PC-3 (cell line): ENCODE measurements at regions of chr17 and their contacts with region 1.

Region 1: GRCh38 chr17:45640141-45640850 is 143.8 kb upstream of the CRHR1 start:
- DNase-seq: peak; percentile 91
- ATAC-seq: peak; percentile 80
- H3K4me3 ChIP-seq: no peak overlapping the region
- H3K27ac ChIP-seq: no peak overlapping the region
- H3K4me1 ChIP-seq: peaks cover 4% of the 10 kb centered on the region; the same call in 1 of the 2 replicates
- H3K27me3 ChIP-seq: no peaks in the 10 kb centered on the region
- CTCF ChIP-seq: peak; percentile 99

Region 2: DNA sequence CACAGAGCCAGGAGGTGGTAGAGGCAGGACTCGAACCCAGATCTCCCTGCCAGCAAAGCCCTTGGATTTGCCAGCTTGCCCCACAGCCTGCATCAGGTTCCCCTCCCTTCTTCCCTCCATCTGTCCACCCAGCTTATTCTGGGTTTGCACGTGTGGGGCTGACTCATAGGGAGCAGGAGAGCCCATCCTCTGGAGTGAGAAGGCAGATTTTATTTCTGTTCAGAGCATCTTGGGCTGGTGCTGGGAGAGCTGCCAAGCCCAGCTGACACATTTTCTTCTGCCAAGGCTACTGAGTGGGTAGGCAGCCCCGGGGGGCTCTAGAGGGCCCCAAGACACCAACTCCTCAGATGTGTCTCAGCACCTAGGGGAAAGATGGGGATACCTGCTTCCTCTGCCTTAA is 37.5 kb after region 1 on chr17:
- CTCF ChIA-PET with region 1: no interaction called
- POLR2A ChIA-PET with region 1: no interaction called
- intact Hi-C with region 1: no loop called
- DNase-seq: peak; percentile 48
- ATAC-seq: 0 out of 2 replicates have a peak, but pooled peaks have one; percentile 31
- H3K4me3 ChIP-seq: no peak overlapping the region
- H3K27ac ChIP-seq: no peak overlapping the region
- H3K4me1 ChIP-seq: no peaks in the 10 kb centered on the region
- H3K27me3 ChIP-seq: peaks cover 23% of the 10 kb centered on the region
- CTCF ChIP-seq: no peak

Region 3: GRCh38 chr17:45719335-45720071 is 79.2 kb after region 1 on chr17:
- CTCF ChIA-PET with region 1: interaction called, 11 read pairs
- POLR2A ChIA-PET with region 1: no interaction called
- intact Hi-C with region 1: loop called (anchors 1 kb)
- DNase-seq: peak; percentile 97
- ATAC-seq: peak; percentile 91
- H3K4me3 ChIP-seq: peak overlapping the region; percentile 37; the same call in 1 of the 2 replicates
- H3K27ac ChIP-seq: peak overlapping the region; percentile 20; the same call in 1 of the 2 replicates
- H3K4me1 ChIP-seq: peaks cover 26% of the 10 kb centered on the region
- H3K27me3 ChIP-seq: peaks cover 13% of the 10 kb centered on the region
- CTCF ChIP-seq: peak; percentile 82

Region 4: GRCh38 chr17:45828628-45829027 is 188.3 kb after region 1 on chr17:
- CTCF ChIA-PET with region 1: interaction called, 42 read pairs
- POLR2A ChIA-PET with region 1: no interaction called
- intact Hi-C with region 1: loop called (anchors 1 kb)
- DNase-seq: peak; percentile 22
- ATAC-seq: no peak; the same call in 1 of the 2 replicates
- H3K4me3 ChIP-seq: no peak overlapping the region
- H3K27ac ChIP-seq: no peak overlapping the region
- H3K4me1 ChIP-seq: 0 out of 2 replicates have a peak, but pooled peaks cover 4% of the 10 kb centered on the region
- H3K27me3 ChIP-seq: 0 out of 2 replicates have a peak, but pooled peaks cover 6% of the 10 kb centered on the region
- CTCF ChIP-seq: no peak; the same call in 1 of the 2 replicates

Region 5: DNA sequence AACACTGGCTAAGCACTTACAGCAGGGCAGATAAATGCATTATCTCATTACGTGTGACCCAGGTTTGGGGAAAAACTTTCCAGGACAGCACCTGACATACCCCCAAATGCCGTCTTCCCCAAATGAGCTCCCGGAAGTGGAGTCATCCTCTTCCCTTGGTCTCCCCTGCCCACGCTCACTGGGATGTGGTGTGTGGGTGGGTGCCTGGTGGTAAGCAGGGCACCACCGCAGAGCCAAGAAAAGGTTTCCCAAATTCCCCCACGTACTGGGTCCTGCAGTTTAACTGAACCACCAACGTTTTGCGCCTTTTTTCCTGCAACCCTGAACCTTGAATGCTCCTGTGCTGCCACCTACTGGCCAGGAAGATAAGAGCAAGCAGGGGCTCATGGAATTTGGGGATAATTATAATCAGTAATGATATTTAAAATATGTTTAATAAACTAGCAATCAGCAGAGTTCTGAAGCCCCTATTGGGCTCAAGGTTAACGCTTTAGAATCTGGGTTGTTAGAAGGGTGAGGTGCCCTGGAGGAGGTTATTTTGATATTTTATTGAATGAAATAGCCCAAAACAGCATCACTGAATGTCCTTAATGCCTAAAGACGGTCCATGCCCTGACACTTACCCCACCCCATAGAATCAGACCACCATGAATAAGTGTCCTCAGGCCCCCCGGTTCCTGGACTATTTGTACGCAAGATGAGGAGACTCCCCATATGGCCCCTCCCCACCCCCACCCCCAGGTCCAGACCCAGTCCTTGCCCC is 212.4 kb after region 1 on chr17:
- CTCF ChIA-PET with region 1: interaction called, 7 read pairs
- POLR2A ChIA-PET with region 1: interaction called, 3 read pairs
- intact Hi-C with region 1: loop called (anchors 1 kb)
- DNase-seq: peak; percentile 82
- ATAC-seq: peak; percentile 60
- H3K4me3 ChIP-seq: peak overlapping the region; percentile 10; the same call in 1 of the 2 replicates
- H3K27ac ChIP-seq: no peak overlapping the region
- H3K4me1 ChIP-seq: no peaks in the 10 kb centered on the region
- H3K27me3 ChIP-seq: peaks cover 4% of the 10 kb centered on the region; the same call in 1 of the 2 replicates
- CTCF ChIP-seq: peak; percentile 98